WTC11 (cell line): ENCODE measurements at regions of chr9 and their contacts with region 1.

Region 1: GRCh38 chr9:77291714-77292113 is 114.4 kb downstream of the VPS13A start:
- DNase-seq: no peak
- ATAC-seq: peak; percentile 95
- H3K4me3 Mint-ChIP-seq: no peak overlapping the region
- H3K27ac Mint-ChIP-seq: peak overlapping the region; percentile 91
- H3K4me1 Mint-ChIP-seq: peaks cover 21% of the 10 kb centered on the region
- H3K27me3 Mint-ChIP-seq: no peaks in the 10 kb centered on the region
- CTCF ChIP-seq: 0 out of 2 replicates have a peak, but pooled peaks have one; percentile 43

Region 2: GRCh38 chr9:76905791-76906650 is 385.7 kb before region 1 on chr9 and contains the start of gene PRUNE2:
- CTCF ChIA-PET with region 1: no interaction called
- POLR2A ChIA-PET with region 1: no interaction called
- DNase-seq: peak; percentile 93
- ATAC-seq: peak; percentile 96
- H3K4me3 Mint-ChIP-seq: peak within 1 kb of the TSS; percentile 83
- H3K27ac Mint-ChIP-seq: no peak within 1 kb of the TSS; the same call in 1 of the 2 replicates
- H3K4me1 Mint-ChIP-seq: peaks cover 35% of the 10 kb centered on the region
- H3K27me3 Mint-ChIP-seq: peaks cover 48% of the 10 kb centered on the region
- CTCF ChIP-seq: no peak
- total RNA-seq, gene PRUNE2: 9.3 to 13.1 TPM (median 9.6 TPM) in 3 replicates

Region 3: DNA sequence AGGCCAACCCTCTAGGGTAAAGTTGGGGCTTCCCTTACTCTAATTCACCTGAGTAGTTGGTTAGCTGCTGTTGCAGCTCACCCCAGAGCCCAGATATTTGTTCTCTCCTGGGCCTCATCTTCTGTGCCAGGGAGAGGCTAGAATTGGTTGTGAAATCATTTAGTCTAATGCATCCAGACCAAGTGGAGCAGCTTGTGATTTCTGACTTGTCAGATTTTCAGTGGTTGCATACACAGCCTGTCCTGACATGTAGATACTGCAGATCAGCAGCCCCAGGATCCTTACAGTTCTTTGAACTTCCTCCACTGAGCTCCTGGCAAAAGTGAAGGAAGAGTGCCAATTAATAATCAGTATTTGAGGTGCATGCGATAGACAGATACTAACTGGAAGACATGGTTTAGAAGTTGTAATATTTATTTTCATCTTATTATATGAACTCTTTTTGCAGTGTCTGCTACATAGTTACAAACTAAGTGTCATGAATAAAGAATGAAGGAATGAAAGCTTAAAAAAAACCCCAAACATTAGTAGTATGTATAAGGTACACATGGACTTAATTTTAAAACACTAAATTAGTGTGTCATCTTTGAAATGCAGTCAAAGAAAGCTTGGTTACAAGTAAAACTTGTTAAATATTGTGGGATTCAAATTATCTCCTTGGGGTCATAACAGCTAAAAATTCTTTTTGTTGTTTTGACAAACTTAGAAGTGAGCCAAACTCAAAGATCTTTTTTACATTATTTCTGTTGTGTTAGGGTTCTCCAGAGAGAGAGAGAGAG is 14.1 kb after region 1 on chr9:
- CTCF ChIA-PET with region 1: interaction called, 13 read pairs
- POLR2A ChIA-PET with region 1: no interaction called
- DNase-seq: no peak
- ATAC-seq: no peak
- H3K4me3 Mint-ChIP-seq: no peak overlapping the region
- H3K27ac Mint-ChIP-seq: no peak overlapping the region
- H3K4me1 Mint-ChIP-seq: no peaks in the 10 kb centered on the region
- H3K27me3 Mint-ChIP-seq: no peaks in the 10 kb centered on the region
- CTCF ChIP-seq: no peak